ENCODE measurements at regions of chr7 and their contacts with region 1.

Region 1: GRCh38 chr7:106009403-106010226 is 46.6 kb downstream of the CDHR3 start:
- DNase-seq: peak; percentile 96
- H3K4me3 ChIP-seq: peak overlapping the region in 2 of 4 donors; percentile 4 to 19
- H3K27ac ChIP-seq: peak overlapping the region; percentile 61 to 80 (median 76)
- H3K4me1 ChIP-seq: peaks cover 0 to 40% (median 33%) of the 10 kb centered on the region in 4 donors
- H3K27me3 ChIP-seq: no peaks in the 10 kb centered on the region
- CTCF ChIP-seq: peak; percentile 91 to 97 (median 95)
- EP300 ChIP-seq: peak in 1 of 4 donors; percentile 60
- POLR2A ChIP-seq: no peak

Region 2: GRCh38 chr7:105759670-105760550 is 249.7 kb before region 1 on chr7:
- intact Hi-C with region 1: loop called (anchors 2 kb)
- DNase-seq: peak; percentile 76
- H3K4me3 ChIP-seq: no peak overlapping the region
- H3K27ac ChIP-seq: no peak overlapping the region
- H3K4me1 ChIP-seq: peaks cover 0 to 11% (median 7%) of the 10 kb centered on the region in 4 donors
- H3K27me3 ChIP-seq: no peaks in the 10 kb centered on the region
- CTCF ChIP-seq: peak; percentile 9 to 69 (median 55)
- EP300 ChIP-seq: no peak
- POLR2A ChIP-seq: no peak

Region 3: DNA sequence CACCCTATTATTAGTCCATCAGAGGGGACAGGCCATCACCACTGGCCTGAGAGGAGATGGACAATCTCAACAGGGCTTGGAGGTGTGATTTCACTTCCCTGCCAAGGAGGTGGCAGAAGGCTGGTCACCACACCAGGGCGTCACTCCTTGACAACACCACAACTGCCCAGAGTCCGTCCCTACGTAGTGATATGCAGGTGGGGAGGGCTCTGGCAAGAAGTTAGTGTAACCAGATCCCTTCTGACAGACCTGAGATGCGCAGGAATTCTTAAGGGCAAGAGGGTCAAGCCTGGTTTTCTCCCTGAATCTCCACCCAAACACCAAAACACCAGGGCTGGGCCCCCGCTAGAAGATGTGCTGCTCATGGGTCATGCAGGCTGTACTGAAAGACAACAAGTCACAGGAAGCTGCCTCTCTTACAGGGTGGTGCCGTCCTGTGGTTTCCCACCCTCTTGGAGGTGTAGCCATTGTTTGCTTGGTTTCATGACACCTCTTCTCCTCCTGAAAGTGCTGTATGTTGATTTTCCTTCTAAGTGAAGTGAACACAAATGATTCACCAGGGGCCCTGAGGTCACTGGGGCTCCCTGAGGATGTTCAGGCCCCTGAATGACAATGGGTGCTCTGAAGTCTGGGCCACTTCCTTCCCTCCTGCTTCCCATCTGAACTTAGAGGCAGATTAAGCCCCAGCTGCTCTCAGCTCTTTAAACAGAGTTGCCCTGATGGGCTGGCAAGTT is 160.3 kb before region 1 on chr7:
- intact Hi-C with region 1: no loop called
- DNase-seq: no peak
- H3K4me3 ChIP-seq: no peak overlapping the region
- H3K27ac ChIP-seq: peak overlapping the region in 3 of 4 donors; percentile 29 to 82 (median 42)
- H3K4me1 ChIP-seq: peaks cover 0 to 51% (median 49%) of the 10 kb centered on the region in 4 donors
- H3K27me3 ChIP-seq: no peaks in the 10 kb centered on the region
- CTCF ChIP-seq: no peak
- EP300 ChIP-seq: no peak
- POLR2A ChIP-seq: no peak

Region 4: GRCh38 chr7:105934572-105935185 is 74.9 kb before region 1 on chr7:
- intact Hi-C with region 1: loop called (anchors 5 kb)
- DNase-seq: no peak
- H3K4me3 ChIP-seq: no peak overlapping the region
- H3K27ac ChIP-seq: peak overlapping the region in 3 of 4 donors; percentile 69 to 81 (median 80)
- H3K4me1 ChIP-seq: peaks cover 0 to 31% (median 22%) of the 10 kb centered on the region in 4 donors
- H3K27me3 ChIP-seq: no peaks in the 10 kb centered on the region
- CTCF ChIP-seq: no peak
- EP300 ChIP-seq: no peak
- POLR2A ChIP-seq: no peak

Region 5: DNA sequence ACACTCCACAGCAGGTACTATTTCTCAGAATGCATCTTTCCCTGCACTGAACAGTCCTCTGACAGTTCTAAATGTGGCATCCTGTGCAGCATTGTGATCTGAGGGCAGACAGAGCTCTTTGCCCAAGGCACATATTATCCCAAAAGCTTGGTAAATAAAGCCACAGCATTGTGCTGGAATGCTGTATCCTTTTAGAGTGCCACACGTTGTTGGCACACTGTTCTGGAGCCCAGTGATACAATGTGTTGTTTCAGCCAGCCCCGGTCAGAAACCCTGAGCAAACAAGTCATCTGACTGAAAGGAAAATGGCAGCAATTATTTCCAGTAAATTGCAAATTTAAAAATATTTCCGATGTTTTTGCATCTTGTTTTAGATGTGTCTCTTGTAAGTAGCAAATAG is 229.8 kb after region 1 on chr7:
- intact Hi-C with region 1: no loop called
- DNase-seq: no peak
- H3K4me3 ChIP-seq: no peak overlapping the region
- H3K27ac ChIP-seq: peak overlapping the region; percentile 43 to 68 (median 61)
- H3K4me1 ChIP-seq: peaks cover 0 to 26% (median 14%) of the 10 kb centered on the region in 4 donors
- H3K27me3 ChIP-seq: no peaks in the 10 kb centered on the region
- CTCF ChIP-seq: no peak
- EP300 ChIP-seq: no peak
- POLR2A ChIP-seq: no peak